Activated CD4-positive, alpha-beta T cell treated with anti-CD3 and anti-CD28 coated beads, Interleukin-2, amount 10 ng/mL, durations not matched to agents 7 days and 5 days (primary cell): ENCODE measurements at regions of chrX and their contacts with region 1.

Region 1: GRCh38 chrX:119753571-119754257 is 4.7 kb upstream of the SOWAHD start:
- DNase-seq: peak; percentile 80
- H3K4me3 Mint-ChIP-seq: no peak overlapping the region
- H3K27ac Mint-ChIP-seq: peak overlapping the region; percentile 97
- H3K4me1 Mint-ChIP-seq: peaks cover 46% of the 10 kb centered on the region
- H3K27me3 Mint-ChIP-seq: no peaks in the 10 kb centered on the region

Region 2: GRCh38 chrX:119775517-119776238 is 22.0 kb after region 1 on chrX:
- CTCF ChIA-PET with region 1: interaction called, 10 read pairs
- POLR2A ChIA-PET with region 1: no interaction called
- DNase-seq: no peak
- H3K4me3 Mint-ChIP-seq: no peak overlapping the region
- H3K27ac Mint-ChIP-seq: peak overlapping the region; percentile 36
- H3K4me1 Mint-ChIP-seq: peaks cover 11% of the 10 kb centered on the region
- H3K27me3 Mint-ChIP-seq: no peaks in the 10 kb centered on the region

Region 3: GRCh38 chrX:119784747-119785446 is 31.2 kb after region 1 on chrX:
- CTCF ChIA-PET with region 1: interaction called, 10 read pairs
- POLR2A ChIA-PET with region 1: no interaction called
- DNase-seq: peak; percentile 46
- H3K4me3 Mint-ChIP-seq: no peak overlapping the region
- H3K27ac Mint-ChIP-seq: no peak overlapping the region
- H3K4me1 Mint-ChIP-seq: peaks cover 34% of the 10 kb centered on the region
- H3K27me3 Mint-ChIP-seq: no peaks in the 10 kb centered on the region